Heart right ventricle (tissue), 16 donors: ENCODE measurements at regions of chr11 and their contacts with region 1.

Region 1: GRCh38 chr11:73597956-73598718 is at the start of gene FAM168A:
- DNase-seq: peak; percentile 96 to 97
- ATAC-seq: peak; percentile 98 to 99 (median 98)
- H3K4me3 ChIP-seq: peak within 1 kb of the TSS; percentile 73 to 100 (median 87)
- H3K27ac ChIP-seq: peak within 1 kb of the TSS; percentile 77 to 95 (median 86)
- H3K4me1 ChIP-seq: peaks cover 4 to 32% (median 21%) of the 10 kb centered on the region in 9 donors
- H3K27me3 ChIP-seq: no peaks in the 10 kb centered on the region
- CTCF ChIP-seq: peak in 5 of 9 donors; percentile 30 to 49 (median 40)
- total RNA-seq, gene FAM168A: 26.7 to 37.1 (median 33.2) TPM

Region 2: GRCh38 chr11:73404048-73404447 is 194.1 kb before region 1 on chr11:
- intact Hi-C with region 1: loop called in 1 of 10 experiments (anchors 5 kb)
- DNase-seq: peak; percentile 72 to 79
- ATAC-seq: peak; percentile 78 to 90 (median 88)
- H3K4me3 ChIP-seq: no peak overlapping the region
- H3K27ac ChIP-seq: peak overlapping the region in 7 of 10 donors; percentile 29 to 71 (median 51)
- H3K4me1 ChIP-seq: peaks cover 3 to 37% (median 19%) of the 10 kb centered on the region in 9 donors
- H3K27me3 ChIP-seq: no peaks in the 10 kb centered on the region
- CTCF ChIP-seq: peak; percentile 58 to 89 (median 82)

Region 3: GRCh38 chr11:73414977-73415651 is 183.0 kb before region 1 on chr11:
- intact Hi-C with region 1: no loop called
- DNase-seq: no peak
- ATAC-seq: peak; percentile 34 to 63 (median 48)
- H3K4me3 ChIP-seq: no peak overlapping the region
- H3K27ac ChIP-seq: peak overlapping the region in 8 of 10 donors; percentile 7 to 75 (median 46)
- H3K4me1 ChIP-seq: peaks cover 0 to 53% (median 26%) of the 10 kb centered on the region in 9 donors
- H3K27me3 ChIP-seq: no peaks in the 10 kb centered on the region
- CTCF ChIP-seq: no peak

Region 4: GRCh38 chr11:73463359-73463758 is 134.8 kb before region 1 on chr11:
- intact Hi-C with region 1: loop called in 2 of 10 experiments (anchors 5 to 10 kb)
- DNase-seq: no peak
- ATAC-seq: no peak
- H3K4me3 ChIP-seq: no peak overlapping the region
- H3K27ac ChIP-seq: peak overlapping the region in 2 of 10 donors; percentile 45 to 70
- H3K4me1 ChIP-seq: peaks cover 4 to 81% (median 55%) of the 10 kb centered on the region in 9 donors
- H3K27me3 ChIP-seq: no peaks in the 10 kb centered on the region
- CTCF ChIP-seq: no peak

Region 5: DNA sequence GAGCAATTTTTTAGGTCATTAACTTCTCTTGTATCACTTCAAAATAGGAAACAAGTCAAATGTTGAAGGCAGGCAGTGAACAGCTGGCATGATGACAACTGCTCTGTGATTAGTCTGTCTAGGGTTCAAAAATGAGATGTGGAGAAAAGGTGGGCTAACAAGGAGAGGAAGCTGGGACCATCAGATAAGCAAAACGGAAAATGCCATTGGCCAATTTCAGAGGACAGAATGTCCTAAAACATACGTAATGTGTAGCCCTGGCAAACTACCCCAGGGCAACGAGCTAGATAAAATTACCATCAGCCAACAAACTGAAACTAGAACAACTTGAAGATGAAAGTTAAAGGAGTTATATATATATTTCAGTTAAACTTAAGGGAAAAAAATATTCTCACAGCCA is 128.7 kb before region 1 on chr11:
- intact Hi-C with region 1: loop called in 2 of 10 experiments (anchors 5 to 10 kb)
- DNase-seq: no peak
- ATAC-seq: peak in 6 of 8 donors; percentile 20 to 74 (median 56)
- H3K4me3 ChIP-seq: no peak overlapping the region
- H3K27ac ChIP-seq: peak overlapping the region; percentile 17 to 70 (median 41)
- H3K4me1 ChIP-seq: peaks cover 10 to 60% (median 56%) of the 10 kb centered on the region in 9 donors
- H3K27me3 ChIP-seq: no peaks in the 10 kb centered on the region
- CTCF ChIP-seq: no peak

Region 6: DNA sequence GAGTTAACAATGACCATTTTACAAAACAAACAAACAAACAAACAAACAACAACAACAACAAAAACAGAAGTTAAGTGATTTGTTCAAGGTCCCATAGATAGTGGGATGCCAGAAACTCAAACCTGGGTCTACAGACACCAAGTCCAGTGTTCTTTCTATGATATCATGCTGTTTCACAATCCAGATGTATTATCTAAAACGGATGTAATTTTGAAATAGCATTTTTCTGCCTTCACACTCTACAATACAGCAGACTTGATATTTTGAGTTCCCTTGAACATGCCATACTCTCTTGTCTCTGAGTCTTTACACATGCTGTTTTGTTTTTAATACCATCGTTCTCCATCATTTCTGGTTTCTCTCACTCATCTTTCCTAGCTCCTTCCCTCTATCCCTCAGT is 117.5 kb before region 1 on chr11:
- intact Hi-C with region 1: no loop called
- DNase-seq: no peak
- ATAC-seq: peak in 3 of 8 donors; percentile 29 to 70 (median 44)
- H3K4me3 ChIP-seq: no peak overlapping the region
- H3K27ac ChIP-seq: no peak overlapping the region
- H3K4me1 ChIP-seq: peaks cover 0 to 22% (median 0%) of the 10 kb centered on the region in 9 donors
- H3K27me3 ChIP-seq: no peaks in the 10 kb centered on the region
- CTCF ChIP-seq: no peak

Region 7: GRCh38 chr11:73528483-73529203 is 69.5 kb before region 1 on chr11:
- intact Hi-C with region 1: loop called in 1 of 10 experiments (anchors 5 kb)
- DNase-seq: no peak
- ATAC-seq: peak in 4 of 8 donors; percentile 22 to 54 (median 36)
- H3K4me3 ChIP-seq: peak overlapping the region in 7 of 10 donors; percentile 4 to 46 (median 32)
- H3K27ac ChIP-seq: peak overlapping the region in 6 of 10 donors; percentile 9 to 73 (median 54)
- H3K4me1 ChIP-seq: peaks cover 0 to 46% (median 36%) of the 10 kb centered on the region in 9 donors
- H3K27me3 ChIP-seq: no peaks in the 10 kb centered on the region
- CTCF ChIP-seq: no peak

Region 8: GRCh38 chr11:73554671-73555320 is 43.3 kb before region 1 on chr11:
- intact Hi-C with region 1: loop called in 1 of 10 experiments (anchors 5 kb)
- DNase-seq: no peak
- ATAC-seq: peak in 1 of 8 donors; percentile 13
- H3K4me3 ChIP-seq: no peak overlapping the region
- H3K27ac ChIP-seq: peak overlapping the region in 7 of 10 donors; percentile 11 to 50 (median 35)
- H3K4me1 ChIP-seq: peaks cover 0 to 53% (median 41%) of the 10 kb centered on the region in 9 donors
- H3K27me3 ChIP-seq: no peaks in the 10 kb centered on the region
- CTCF ChIP-seq: no peak

Region 9: DNA sequence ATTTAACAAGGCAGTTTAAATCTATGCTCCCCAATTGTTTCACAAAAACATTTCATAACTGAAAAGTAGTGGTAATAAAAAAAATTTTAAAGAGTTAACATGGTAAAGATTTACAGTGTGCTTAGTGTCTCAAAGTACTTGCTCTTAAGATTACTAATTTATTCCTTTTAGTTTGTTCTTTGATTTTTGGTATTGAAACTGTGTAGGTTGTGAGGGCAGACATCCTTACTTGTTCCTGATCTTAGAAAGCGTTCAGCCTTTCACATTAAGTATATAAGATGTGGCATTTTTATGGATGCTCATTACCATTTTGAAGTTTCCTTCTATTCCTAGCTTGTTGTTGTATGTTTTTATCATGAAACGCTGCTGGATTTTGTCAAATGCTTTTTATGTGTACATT is 129.9 kb after region 1 on chr11:
- intact Hi-C with region 1: no loop called
- DNase-seq: no peak
- ATAC-seq: no peak
- H3K4me3 ChIP-seq: no peak overlapping the region
- H3K27ac ChIP-seq: no peak overlapping the region
- H3K4me1 ChIP-seq: no peaks in the 10 kb centered on the region
- H3K27me3 ChIP-seq: no peaks in the 10 kb centered on the region
- CTCF ChIP-seq: no peak